B cell (primary cell): ENCODE measurements at regions of chr12 and their contacts with region 1.

Region 1: GRCh38 chr12:124884587-124885438 is 21.1 kb upstream of the SCARB1 start:
- DNase-seq: peak; percentile 88
- ATAC-seq: peak; percentile 96
- H3K4me3 ChIP-seq: peak overlapping the region in 4 of 5 experiments; percentile 11 to 38 (median 28)
- H3K4me3 Mint-ChIP-seq: peak overlapping the region; percentile 83
- H3K27ac ChIP-seq: peak overlapping the region; percentile 59 to 67
- H3K27ac Mint-ChIP-seq: peak overlapping the region; percentile 95
- H3K4me1 ChIP-seq: peaks cover 55 to 70% of the 10 kb centered on the region in 2 donors
- H3K4me1 Mint-ChIP-seq: peaks cover 64% of the 10 kb centered on the region
- H3K27me3 ChIP-seq: peaks cover 0 to 3% (median 0%) of the 10 kb centered on the region in 4 experiments
- H3K27me3 Mint-ChIP-seq: no peaks in the 10 kb centered on the region
- CTCF ChIP-seq: no peak

Region 2: GRCh38 chr12:124898200-124898922 is 13.5 kb after region 1 on chr12:
- CTCF ChIA-PET with region 1: interaction called, 19 read pairs
- POLR2A ChIA-PET with region 1: no interaction called
- intact Hi-C with region 1: loop called (anchors 1 kb)
- DNase-seq: peak; percentile 86
- ATAC-seq: peak; percentile 91
- H3K4me3 ChIP-seq: peak overlapping the region in 1 of 5 experiments; percentile 17
- H3K4me3 Mint-ChIP-seq: peak overlapping the region; percentile 60
- H3K27ac ChIP-seq: no peak overlapping the region
- H3K27ac Mint-ChIP-seq: no peak overlapping the region
- H3K4me1 ChIP-seq: peaks cover 26 to 39% of the 10 kb centered on the region in 2 donors
- H3K4me1 Mint-ChIP-seq: peaks cover 46% of the 10 kb centered on the region
- H3K27me3 ChIP-seq: no peaks in the 10 kb centered on the region
- H3K27me3 Mint-ChIP-seq: no peaks in the 10 kb centered on the region
- CTCF ChIP-seq: peak; percentile 86